Activated naive CD4-positive, alpha-beta T cell treated with anti-CD3 and anti-CD28 coated beads for 36 hours (primary cell): ENCODE measurements at regions of chr11 and their contacts with region 1.

Region 1: DNA sequence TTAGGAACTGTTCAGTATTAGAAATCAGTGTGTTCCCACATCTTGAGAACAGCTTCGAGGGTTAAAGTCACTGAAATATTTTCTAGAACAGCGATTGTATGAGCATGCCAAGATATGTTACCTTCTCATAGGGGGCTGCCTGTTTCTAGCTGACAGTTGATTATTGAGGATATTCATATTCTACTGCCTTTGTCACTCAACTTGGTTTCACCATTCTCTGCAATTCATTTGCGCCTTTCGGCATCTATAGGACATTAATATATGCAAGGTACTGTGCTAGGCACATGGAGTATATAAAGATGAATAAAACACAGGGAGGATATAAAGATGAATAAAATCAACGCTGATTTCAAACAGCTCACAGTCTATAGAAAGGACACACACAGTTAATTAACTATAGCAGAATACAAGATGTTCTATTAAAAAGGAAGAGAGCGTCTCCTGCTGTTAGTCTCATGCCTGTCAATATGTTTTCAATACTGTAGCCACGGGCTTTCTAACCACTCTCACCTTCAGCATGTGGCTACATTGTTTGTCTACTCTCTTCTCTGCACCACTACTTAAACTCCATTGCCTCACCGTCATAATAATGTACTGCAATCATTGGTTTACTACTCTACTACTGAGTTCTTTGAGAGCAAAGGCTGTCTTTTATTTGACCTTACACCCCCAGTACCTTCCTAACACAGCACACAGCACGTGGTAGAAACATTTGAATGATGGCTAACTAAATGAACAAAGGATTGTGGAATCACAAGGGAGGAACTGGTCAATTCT is 81.9 kb downstream of the RAB30 start:
- DNase-seq: no peak
- H3K4me3 Mint-ChIP-seq: no peak overlapping the region
- H3K27ac Mint-ChIP-seq: no peak overlapping the region
- H3K4me1 Mint-ChIP-seq: peaks cover 40% of the 10 kb centered on the region
- H3K27me3 Mint-ChIP-seq: no peaks in the 10 kb centered on the region

Region 2: DNA sequence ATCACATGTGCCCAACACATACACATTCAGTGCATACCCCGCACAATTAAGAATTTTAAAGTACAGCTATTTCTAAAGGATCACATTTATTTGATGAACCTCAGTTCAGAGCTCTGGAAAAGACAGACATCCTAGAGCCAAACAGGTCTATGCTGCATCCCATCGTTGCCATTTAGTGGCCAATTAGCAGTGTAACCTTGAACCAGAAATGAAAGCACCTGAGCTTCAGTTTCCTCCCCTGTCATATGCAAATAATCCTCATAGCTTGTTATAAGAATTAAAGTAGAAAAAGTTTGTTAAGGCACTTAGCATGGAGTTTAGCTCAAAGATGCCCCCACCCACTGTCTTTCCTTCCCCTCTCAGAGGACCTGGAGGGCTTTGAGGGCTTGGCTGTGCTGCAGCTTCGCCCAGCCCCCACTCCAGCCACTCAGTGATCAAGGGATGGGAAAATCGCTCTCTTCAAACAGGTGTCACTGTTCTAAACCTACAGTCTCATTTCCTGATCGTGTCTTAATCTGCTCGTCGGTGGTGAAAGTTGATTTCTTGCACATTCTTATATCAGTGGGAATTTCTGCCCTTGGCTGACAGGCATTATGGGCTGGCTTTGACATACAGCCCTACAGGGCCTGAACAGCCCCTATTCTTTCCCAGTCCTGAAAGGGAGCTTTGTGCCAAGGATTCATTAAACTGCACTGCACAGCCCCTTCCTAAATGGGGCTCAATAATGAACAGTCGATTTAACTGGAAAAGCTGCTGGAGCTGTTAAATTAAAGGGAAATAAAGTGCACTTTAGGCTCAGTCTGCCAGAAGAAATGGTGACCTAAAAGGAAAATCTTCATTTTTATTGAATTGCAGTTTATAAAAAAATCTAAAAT is 232.8 kb before region 1 on chr11:
- CTCF ChIA-PET with region 1: no interaction called
- intact Hi-C with region 1: no loop called
- DNase-seq: peak; percentile 21
- H3K4me3 Mint-ChIP-seq: peak overlapping the region; percentile 19
- H3K27ac Mint-ChIP-seq: no peak overlapping the region
- H3K4me1 Mint-ChIP-seq: peaks cover 26% of the 10 kb centered on the region
- H3K27me3 Mint-ChIP-seq: no peaks in the 10 kb centered on the region

Region 3: GRCh38 chr11:82906244-82906654 is 83.6 kb before region 1 on chr11:
- CTCF ChIA-PET with region 1: interaction called, 4 read pairs
- intact Hi-C with region 1: loop called (anchors 2 kb)
- DNase-seq: no peak
- H3K4me3 Mint-ChIP-seq: no peak overlapping the region
- H3K27ac Mint-ChIP-seq: no peak overlapping the region
- H3K4me1 Mint-ChIP-seq: peaks cover 61% of the 10 kb centered on the region
- H3K27me3 Mint-ChIP-seq: no peaks in the 10 kb centered on the region

Region 4: DNA sequence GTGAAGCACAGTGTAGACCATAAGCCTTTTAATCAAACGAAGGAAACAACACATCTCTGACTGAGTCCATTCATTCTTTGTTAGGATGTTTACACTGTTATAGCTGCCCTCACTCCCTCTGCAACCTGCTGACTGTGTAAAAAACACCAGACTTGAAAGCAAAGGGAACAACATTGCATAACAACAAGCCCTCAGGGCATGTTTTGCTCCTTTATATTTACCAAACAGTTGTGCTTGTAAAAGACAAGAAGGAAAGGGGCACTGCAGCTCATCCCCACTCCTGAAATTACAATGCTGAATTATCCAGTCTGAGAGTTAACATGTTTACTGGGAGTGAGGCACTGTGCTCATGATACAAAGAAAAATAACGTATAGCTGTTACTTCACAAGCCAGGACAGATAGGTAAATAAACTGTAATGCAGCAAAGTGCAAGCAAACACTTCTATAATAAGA is 35.5 kb after region 1 on chr11:
- CTCF ChIA-PET with region 1: no interaction called
- intact Hi-C with region 1: no loop called
- DNase-seq: no peak
- H3K4me3 Mint-ChIP-seq: no peak overlapping the region
- H3K27ac Mint-ChIP-seq: no peak overlapping the region
- H3K4me1 Mint-ChIP-seq: peaks cover 22% of the 10 kb centered on the region
- H3K27me3 Mint-ChIP-seq: no peaks in the 10 kb centered on the region